ENCODE measurements at regions of chr1 and their contacts with region 1.

Region 1: DNA sequence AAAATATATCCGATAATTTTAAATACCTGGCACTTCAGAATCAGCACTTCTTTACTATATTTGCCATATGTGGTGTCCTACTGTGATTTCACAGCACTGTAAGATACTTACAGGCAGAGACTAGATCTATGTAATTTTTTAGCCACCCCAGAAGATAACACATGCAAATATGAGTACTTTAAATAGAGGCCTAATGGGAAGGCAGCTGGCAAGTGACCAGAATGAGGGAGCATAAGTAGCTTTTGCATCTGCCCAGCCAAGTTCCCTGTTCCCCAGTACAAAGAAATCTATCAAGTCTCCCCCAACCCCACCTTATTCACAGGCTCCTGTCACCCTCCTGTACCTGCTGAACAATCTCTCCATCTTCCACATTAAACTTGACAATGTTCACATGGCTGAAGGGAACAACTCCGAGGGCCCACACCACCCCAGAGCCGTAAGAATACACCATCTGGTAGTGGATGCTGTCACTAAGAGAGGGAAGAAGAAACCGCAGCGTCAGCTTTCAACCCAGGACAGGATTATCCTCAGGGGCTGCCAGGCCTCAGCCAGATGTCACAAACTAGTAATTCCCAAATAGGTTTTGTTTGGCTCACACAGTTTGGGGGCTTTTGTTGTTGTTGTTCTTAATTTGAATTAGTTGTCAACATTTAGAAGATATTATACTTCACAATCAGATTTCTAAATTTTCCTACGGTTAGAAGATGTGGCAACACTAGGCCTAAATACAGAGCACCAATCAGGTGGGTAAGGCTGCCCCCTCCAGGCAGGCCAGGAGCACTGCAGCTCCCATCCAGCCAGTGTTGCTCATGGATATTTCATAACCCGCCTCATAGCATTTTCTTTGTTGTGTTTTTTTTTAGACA is 10.4 kb downstream of the EMC1 start:
- DNase-seq: peak; percentile 54
- H3K4me3 Mint-ChIP-seq: no peak overlapping the region
- H3K27ac Mint-ChIP-seq: no peak overlapping the region
- H3K4me1 Mint-ChIP-seq: no peaks in the 10 kb centered on the region
- H3K27me3 Mint-ChIP-seq: no peaks in the 10 kb centered on the region

Region 2: GRCh38 chr1:19123837-19124236 is 117.1 kb before region 1 on chr1:
- intact Hi-C with region 1: loop called (anchors 10 kb)
- DNase-seq: no peak
- H3K4me3 Mint-ChIP-seq: peak overlapping the region; percentile 35
- H3K27ac Mint-ChIP-seq: peak overlapping the region; percentile 56
- H3K4me1 Mint-ChIP-seq: peaks cover 29% of the 10 kb centered on the region
- H3K27me3 Mint-ChIP-seq: no peaks in the 10 kb centered on the region

Region 3: DNA sequence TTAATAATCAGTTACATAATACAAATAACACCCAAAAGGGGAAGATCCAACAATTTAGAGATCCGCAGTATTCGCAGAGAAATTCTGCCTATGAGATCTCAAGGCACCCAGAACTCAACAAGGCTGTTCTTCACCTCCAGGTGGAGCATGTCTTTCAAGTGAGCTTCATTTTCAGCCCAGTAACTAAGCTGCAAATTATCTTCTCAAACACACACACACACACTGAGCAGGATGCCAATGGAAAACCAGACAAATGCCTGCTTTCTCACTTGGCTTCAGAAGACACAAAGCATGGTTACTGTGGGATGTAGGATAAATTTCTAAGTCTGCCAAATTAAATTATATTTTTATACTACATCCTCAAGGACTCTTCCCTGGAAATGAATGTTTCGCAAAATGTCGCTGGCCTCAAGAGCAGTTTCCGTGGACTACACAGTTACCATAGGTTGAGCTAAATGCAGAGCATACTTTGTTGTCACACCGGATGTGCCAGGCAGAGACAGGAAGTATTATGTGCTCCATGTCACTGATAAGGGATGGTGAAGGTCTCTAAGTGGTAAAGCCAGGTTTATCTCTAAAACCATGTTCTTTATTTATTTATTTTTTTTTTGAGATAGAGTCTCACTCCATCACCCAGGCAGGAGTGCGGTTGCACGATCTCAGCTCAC is 61.2 kb before region 1 on chr1:
- intact Hi-C with region 1: loop called (anchors 1 kb)
- DNase-seq: no peak
- H3K4me3 Mint-ChIP-seq: no peak overlapping the region
- H3K27ac Mint-ChIP-seq: peak overlapping the region; percentile 88
- H3K4me1 Mint-ChIP-seq: peaks cover 24% of the 10 kb centered on the region
- H3K27me3 Mint-ChIP-seq: no peaks in the 10 kb centered on the region